ENCODE measurements at regions of chr11 and their contacts with region 1.

Region 1: GRCh38 chr11:65637794-65638317 is at the start of gene SIPA1:
- DNase-seq: peak; percentile 73 to 80 (median 77)
- H3K4me3 ChIP-seq: peak within 1 kb of the TSS; percentile 81
- H3K4me3 Mint-ChIP-seq: peak within 1 kb of the TSS; percentile 89 to 99 (median 97)
- H3K27ac ChIP-seq: peak within 1 kb of the TSS; percentile 98
- H3K27ac Mint-ChIP-seq: peak within 1 kb of the TSS; percentile 96 to 100 (median 100)
- H3K4me1 ChIP-seq: peaks cover 64% of the 10 kb centered on the region
- H3K4me1 Mint-ChIP-seq: peaks cover 39 to 61% (median 41%) of the 10 kb centered on the region in 3 donors
- H3K27me3 ChIP-seq: no peaks in the 10 kb centered on the region
- H3K27me3 Mint-ChIP-seq: peaks cover 0 to 3% of the 10 kb centered on the region in 2 donors
- total RNA-seq, gene SIPA1: 111 to 123 TPM

Region 2: GRCh38 chr11:65471410-65471762 is 166.5 kb before region 1 on chr11:
- CTCF ChIA-PET with region 1: no interaction called
- POLR2A ChIA-PET with region 1: no interaction called
- DNase-seq: peak in 1 of 5 donors; percentile 21
- H3K4me3 ChIP-seq: peak overlapping the region; percentile 25
- H3K4me3 Mint-ChIP-seq: peak overlapping the region in 1 of 7 donors; percentile 73
- H3K27ac ChIP-seq: peak overlapping the region; percentile 73
- H3K27ac Mint-ChIP-seq: peak overlapping the region; percentile 96 to 99 (median 98)
- H3K4me1 ChIP-seq: peaks cover 21% of the 10 kb centered on the region
- H3K4me1 Mint-ChIP-seq: peaks cover 16 to 33% (median 20%) of the 10 kb centered on the region in 3 donors
- H3K27me3 ChIP-seq: no peaks in the 10 kb centered on the region
- H3K27me3 Mint-ChIP-seq: no peaks in the 10 kb centered on the region

Region 3: DNA sequence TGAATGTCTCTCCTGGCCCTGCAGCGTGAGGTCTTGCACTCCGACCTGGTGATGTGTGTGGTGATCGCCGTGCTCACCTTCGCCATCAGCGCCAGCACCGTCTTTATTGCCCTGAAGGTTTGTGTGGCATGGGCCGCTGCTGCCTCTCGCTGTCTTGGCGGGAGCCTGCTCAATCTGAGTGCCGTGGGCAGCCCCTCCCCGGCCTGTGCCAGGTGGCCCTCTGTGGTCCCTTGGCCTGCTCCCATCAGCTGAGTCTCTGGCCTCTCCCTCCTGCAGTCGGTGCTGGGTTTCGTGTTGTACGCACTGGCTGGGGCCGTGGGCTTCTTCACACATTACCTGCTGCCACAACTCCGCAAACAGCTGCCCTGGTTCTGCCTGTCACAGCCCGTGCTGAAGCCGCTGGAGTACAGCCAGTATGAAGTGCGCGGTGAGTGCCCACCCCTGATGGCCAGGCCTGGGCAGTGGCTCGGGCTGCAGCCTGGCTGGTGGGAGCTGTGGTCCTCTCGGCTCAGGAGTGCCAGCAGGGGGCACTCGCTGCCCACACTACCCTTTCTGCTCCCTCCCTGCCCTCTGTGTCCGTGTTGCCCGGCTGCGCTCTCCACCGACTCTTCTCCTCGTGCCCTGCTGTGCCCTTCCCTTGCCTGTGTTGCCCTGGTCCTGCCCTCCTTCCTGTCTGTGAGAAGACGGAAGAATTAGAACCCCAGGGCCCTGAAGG is 12.1 kb before region 1 on chr11:
- CTCF ChIA-PET with region 1: interaction called, 20 read pairs
- POLR2A ChIA-PET with region 1: interaction called, 6 read pairs
- DNase-seq: peak; percentile 48 to 73 (median 57)
- H3K4me3 ChIP-seq: no peak overlapping the region
- H3K4me3 Mint-ChIP-seq: no peak overlapping the region
- H3K27ac ChIP-seq: no peak overlapping the region
- H3K27ac Mint-ChIP-seq: peak overlapping the region; percentile 10 to 84 (median 71)
- H3K4me1 ChIP-seq: peaks cover 7% of the 10 kb centered on the region
- H3K4me1 Mint-ChIP-seq: peaks cover 4 to 14% (median 6%) of the 10 kb centered on the region in 3 donors
- H3K27me3 ChIP-seq: no peaks in the 10 kb centered on the region
- H3K27me3 Mint-ChIP-seq: no peaks in the 10 kb centered on the region

Region 4: DNA sequence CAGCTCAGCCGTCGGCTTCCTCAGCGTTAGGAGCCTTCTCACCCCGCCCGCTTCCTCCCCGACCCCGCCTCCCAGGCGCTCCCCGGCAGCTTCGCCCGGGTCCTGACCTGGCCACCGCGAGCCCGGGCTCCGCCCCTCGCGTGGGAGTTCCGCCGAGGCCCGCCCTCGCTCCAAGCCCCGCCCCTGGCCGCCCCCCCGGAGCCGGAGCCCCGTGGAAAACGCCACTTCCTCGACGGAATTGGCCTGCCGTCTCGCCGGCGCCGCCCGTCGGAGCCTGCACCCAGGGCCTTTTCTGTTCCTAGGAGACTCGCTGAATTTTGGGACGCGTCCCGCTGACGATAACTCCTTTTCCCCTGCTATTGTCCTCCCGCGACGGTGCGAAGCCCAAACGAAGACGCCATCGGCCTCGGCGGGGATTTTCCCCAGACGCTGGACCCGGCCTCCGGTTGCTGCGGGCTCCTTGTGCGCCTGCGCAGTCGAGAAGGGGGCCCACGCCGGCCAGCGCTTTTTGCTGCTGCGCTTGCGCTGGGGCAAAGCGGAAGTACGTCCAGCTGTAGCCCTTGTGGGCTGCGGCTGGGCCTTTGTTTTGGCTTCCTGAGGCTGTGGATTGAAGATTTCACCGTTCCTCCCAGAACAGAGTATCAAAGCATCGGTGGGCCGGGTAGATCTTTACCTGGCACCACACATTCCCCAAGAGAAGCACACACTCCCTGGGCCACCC is 14.8 kb after region 1 on chr11:
- CTCF ChIA-PET with region 1: interaction called, 26 read pairs
- POLR2A ChIA-PET with region 1: interaction called, 93 read pairs
- DNase-seq: peak; percentile 95 to 97 (median 97)
- H3K4me3 ChIP-seq: peak overlapping the region; percentile 73
- H3K4me3 Mint-ChIP-seq: peak overlapping the region; percentile 82 to 93 (median 86)
- H3K27ac ChIP-seq: peak overlapping the region; percentile 97
- H3K27ac Mint-ChIP-seq: peak overlapping the region; percentile 89 to 100 (median 97)
- H3K4me1 ChIP-seq: peaks cover 31% of the 10 kb centered on the region
- H3K4me1 Mint-ChIP-seq: peaks cover 54 to 64% (median 54%) of the 10 kb centered on the region in 3 donors
- H3K27me3 ChIP-seq: no peaks in the 10 kb centered on the region
- H3K27me3 Mint-ChIP-seq: peaks cover 0 to 8% of the 10 kb centered on the region in 2 donors

Region 5: DNA sequence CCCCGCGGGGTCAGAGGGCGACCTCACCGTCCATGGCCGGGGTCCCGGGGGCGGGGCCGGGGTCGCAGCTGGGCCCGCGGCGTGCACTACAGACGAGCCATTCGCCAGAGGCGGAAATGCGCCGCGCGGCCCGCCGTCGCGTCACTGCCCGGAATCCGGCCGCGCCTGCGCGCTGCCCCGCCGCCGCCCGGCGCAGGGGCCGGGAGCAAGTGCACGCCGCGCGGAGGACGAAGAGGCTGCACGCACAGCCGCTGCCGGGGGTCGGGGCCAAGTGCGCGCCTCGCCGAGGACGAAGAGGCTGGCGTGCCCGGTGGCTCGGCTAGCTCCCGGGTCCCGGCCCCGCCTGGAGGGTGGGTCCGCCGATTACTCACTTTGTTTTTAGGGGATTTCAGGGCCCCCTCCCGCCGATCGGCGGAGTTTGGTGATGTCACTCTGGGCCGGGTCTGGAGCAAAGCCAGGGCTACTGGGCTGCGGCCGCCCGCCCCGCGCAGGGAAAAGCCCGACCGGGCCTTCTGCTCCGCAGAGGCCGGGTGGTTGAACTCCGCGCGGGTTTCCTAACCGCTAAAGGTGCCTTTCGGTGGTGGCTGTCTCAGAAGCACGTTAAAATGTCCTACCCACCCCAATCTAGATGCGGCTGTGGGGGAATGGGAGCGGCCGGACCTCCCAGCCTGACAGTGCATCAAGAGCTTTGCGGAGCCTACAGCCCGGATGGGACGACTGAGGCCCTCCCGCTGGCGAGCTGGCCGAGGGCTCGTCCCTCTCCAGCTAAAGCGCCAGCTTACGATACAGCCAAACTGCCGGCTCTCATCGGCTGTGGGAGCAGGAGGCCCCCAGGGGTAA is 25.2 kb after region 1 on chr11 and contains the start of gene RELA:
- CTCF ChIA-PET with region 1: interaction called, 6 read pairs
- POLR2A ChIA-PET with region 1: interaction called, 32 read pairs
- DNase-seq: peak; percentile 83 to 96 (median 88)
- H3K4me3 ChIP-seq: peak within 1 kb of the TSS; percentile 97
- H3K4me3 Mint-ChIP-seq: peak within 1 kb of the TSS; percentile 88 to 97 (median 90)
- H3K27ac ChIP-seq: peak within 1 kb of the TSS; percentile 97
- H3K27ac Mint-ChIP-seq: peak within 1 kb of the TSS; percentile 92 to 99 (median 98)
- H3K4me1 ChIP-seq: peaks cover 22% of the 10 kb centered on the region
- H3K4me1 Mint-ChIP-seq: peaks cover 30 to 50% (median 30%) of the 10 kb centered on the region in 3 donors
- H3K27me3 ChIP-seq: no peaks in the 10 kb centered on the region
- H3K27me3 Mint-ChIP-seq: no peaks in the 10 kb centered on the region
- total RNA-seq, gene RELA: 87.3 to 89.7 TPM

Region 6: GRCh38 chr11:65859200-65859811 is 221.4 kb after region 1 on chr11:
- CTCF ChIA-PET with region 1: interaction called, 4 read pairs
- POLR2A ChIA-PET with region 1: interaction called, 10 read pairs
- DNase-seq: peak; percentile 94 to 99 (median 97)
- H3K4me3 ChIP-seq: peak overlapping the region; percentile 94
- H3K4me3 Mint-ChIP-seq: peak overlapping the region; percentile 90 to 96 (median 93)
- H3K27ac ChIP-seq: peak overlapping the region; percentile 93
- H3K27ac Mint-ChIP-seq: peak overlapping the region; percentile 88 to 98 (median 98)
- H3K4me1 ChIP-seq: peaks cover 52% of the 10 kb centered on the region
- H3K4me1 Mint-ChIP-seq: peaks cover 46 to 62% (median 55%) of the 10 kb centered on the region in 3 donors
- H3K27me3 ChIP-seq: no peaks in the 10 kb centered on the region
- H3K27me3 Mint-ChIP-seq: no peaks in the 10 kb centered on the region

Measured in CD8-positive, alpha-beta memory T cell (primary cell).